ENCODE measurements at regions of chr6 and their contacts with region 1.

Region 1: GRCh38 chr6:73309769-73310502 is 44.1 kb downstream of the DPPA5 start:
- DNase-seq: peak in 1 of 2 donors; percentile 78
- H3K4me3 ChIP-seq: peak overlapping the region; percentile 59 to 76
- H3K27ac ChIP-seq: peak overlapping the region; percentile 56 to 67
- H3K4me1 ChIP-seq: peaks cover 0 to 6% of the 10 kb centered on the region in 2 donors
- H3K27me3 ChIP-seq: peaks cover 4% of the 10 kb centered on the region
- CTCF ChIP-seq: peak in 2 of 3 experiments; percentile 42 to 67

Region 2: GRCh38 chr6:73329201-73329600 is 19.3 kb after region 1 on chr6:
- intact Hi-C with region 1: loop called (anchors 1 kb)
- DNase-seq: no peak
- H3K4me3 ChIP-seq: no peak overlapping the region
- H3K27ac ChIP-seq: no peak overlapping the region
- H3K4me1 ChIP-seq: no peaks in the 10 kb centered on the region
- H3K27me3 ChIP-seq: no peaks in the 10 kb centered on the region
- CTCF ChIP-seq: no peak

Region 3: DNA sequence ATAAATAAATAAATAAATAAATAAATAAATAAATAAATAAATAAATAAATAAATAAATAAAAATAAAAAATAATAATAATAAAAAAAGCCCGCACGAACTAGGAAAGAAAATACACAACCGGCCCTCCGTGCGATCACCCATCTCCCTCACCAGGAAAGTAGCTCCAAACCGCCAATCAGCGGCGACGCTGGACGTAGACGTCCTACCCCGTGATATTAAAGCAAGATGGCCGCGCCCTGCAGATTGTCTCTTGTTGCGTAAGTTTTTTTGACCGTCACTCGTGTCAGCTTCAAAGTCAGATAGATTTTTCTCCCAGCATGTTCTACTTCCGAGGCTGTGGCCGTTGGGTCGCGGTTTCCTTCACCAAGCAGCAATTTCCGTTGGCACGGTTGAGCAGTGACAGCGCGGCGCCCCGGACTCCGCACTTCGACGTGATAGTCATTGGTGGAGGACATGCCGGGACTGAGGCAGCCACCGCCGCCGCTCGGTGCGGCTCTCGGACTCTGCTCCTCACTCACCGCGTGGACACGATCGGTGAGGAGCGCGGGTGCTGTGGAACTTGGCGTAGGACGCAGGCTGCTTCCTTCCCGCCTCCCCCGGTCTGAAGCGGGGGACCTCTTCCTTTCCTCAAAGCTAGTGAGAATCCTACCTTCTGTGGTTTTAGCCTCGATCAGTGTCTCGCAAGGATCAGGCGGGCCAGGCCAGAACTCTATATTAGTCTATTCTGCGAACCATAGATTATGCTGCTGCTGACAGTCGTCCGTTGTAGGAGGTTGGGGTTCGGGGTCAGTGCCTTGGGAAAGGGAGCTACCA is 151.8 kb after region 1 on chr6 and contains the start of gene MTO1:
- intact Hi-C with region 1: no loop called
- DNase-seq: peak; percentile 69 to 95
- H3K4me3 ChIP-seq: peak within 1 kb of the TSS; percentile 82 to 96
- H3K27ac ChIP-seq: peak within 1 kb of the TSS; percentile 90 to 95
- H3K4me1 ChIP-seq: peaks cover 0 to 13% of the 10 kb centered on the region in 2 donors
- H3K27me3 ChIP-seq: no peaks in the 10 kb centered on the region
- CTCF ChIP-seq: no peak
- total RNA-seq, gene MTO1: 12.5 TPM